Mucosa of descending colon (tissue), 3 donors: ENCODE measurements at regions of chr4 and their contacts with region 1.

Region 1: DNA sequence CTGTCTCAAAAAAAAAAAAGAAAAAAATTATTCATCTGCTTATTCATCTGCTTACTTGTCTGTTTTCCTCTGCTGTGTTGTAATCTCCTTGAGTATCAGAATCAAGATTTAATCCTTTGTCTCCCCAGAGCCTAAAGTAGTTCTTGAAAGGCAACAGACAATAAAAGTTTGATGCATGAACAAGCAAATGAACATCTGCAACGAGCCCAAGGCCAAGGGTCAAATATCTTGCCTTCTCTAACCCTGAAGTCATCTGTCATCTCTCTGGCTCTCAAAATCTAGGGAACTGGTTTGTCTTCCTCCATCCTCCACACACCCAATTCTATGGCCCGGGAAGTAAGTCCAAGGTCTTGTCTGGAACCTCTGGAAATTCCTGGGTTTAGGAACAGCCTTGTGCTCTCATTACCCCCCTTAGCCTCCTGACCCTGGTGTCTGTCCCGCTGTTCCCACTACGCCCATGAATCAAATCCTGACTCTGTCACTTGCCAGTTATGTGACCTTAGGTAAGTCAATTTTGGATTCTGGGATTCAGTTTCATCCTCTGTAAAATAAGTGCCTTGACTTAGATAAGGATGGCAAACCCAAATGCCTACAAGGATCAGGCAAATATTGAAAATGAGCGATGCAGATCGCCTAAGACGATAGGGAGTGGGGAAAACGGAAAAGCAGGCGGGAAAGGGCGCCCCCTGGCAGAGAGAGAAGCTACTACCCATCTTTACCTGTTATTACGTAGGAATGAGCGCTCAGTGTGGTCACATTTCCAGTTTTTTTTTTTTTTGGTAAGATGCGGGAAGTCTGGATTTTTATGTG is 102.7 kb upstream of the DHX15 start:
- DNase-seq: peak in 2 of 3 donors; percentile 67 to 68
- ATAC-seq: peak; percentile 77
- H3K4me3 ChIP-seq: no peak overlapping the region
- H3K4me1 ChIP-seq: no peaks in the 10 kb centered on the region
- CTCF ChIP-seq: peak; percentile 17

Region 2: DNA sequence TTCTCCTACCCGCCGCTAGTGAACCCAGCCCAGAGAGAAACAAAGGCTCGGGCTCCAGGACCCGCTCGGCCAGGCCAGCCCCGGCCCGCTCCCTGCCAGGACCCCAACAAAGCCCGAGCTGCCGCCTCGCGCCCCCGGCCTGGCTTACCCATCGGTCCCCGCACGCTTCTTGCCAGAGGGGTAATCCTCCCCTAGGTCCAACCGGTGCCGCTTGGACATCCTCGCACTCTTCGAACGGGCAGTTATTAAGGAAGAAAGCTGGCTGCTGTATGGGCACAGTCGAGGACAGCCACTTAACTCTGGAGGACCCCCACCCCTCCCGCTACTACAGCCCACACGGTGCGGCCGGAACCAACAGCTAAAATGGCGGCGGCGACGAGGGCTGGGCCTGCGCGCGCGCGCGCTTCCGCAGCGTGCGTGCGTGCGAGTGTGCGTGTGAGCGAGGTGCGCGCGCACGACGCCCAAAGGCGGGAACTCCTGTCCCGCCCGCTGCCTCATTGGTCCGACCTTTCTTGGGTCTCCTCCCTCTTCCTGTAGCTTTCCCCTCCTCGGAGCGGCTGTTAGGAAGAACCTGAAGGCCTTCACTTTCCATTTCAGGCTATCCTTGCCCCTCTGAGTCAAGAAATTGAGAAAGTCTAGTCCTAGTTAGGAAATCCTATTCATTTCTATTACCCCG is 102.8 kb before region 1 on chr4 and contains the start of gene DHX15:
- intact Hi-C with region 1: loop called in 1 of 2 experiments (anchors 10 kb)
- DNase-seq: peak; percentile 95 to 97 (median 97)
- ATAC-seq: peak; percentile 96
- H3K4me3 ChIP-seq: peak within 1 kb of the TSS; percentile 100
- H3K4me1 ChIP-seq: peaks cover 28% of the 10 kb centered on the region
- CTCF ChIP-seq: no peak
- total RNA-seq, gene DHX15: 118 to 136 (median 135) TPM